Caco-2 (cell line): ENCODE measurements at regions of chr12 and their contacts with region 1.

Region 1: DNA sequence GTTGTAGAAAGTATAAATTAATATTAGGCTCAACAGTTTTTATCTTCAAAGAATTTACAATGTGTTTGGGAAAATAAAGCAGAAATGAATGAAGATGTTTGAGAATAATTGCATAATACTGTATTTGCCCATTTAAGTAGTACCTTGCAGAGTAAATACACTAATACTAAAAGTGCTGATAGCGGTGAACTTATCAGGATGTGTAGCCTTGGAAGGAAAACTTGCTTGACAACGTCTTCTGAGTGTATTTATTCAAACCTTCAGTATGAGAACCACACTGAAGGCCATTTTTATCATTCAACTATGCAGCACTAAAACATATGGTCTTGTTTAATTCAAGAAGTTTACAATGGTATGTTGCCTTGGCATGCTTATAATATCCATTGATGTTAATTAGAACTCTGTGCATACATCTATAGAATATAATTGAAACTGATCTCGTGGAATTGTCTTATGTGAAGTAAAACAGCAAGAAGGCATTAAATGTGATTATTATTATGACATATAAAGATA is 41.3 kb downstream of the MSRB3 start:
- DNase-seq: peak in 1 of 2 experiments; percentile 65
- H3K4me3 ChIP-seq: no peak overlapping the region
- H3K4me3 Mint-ChIP-seq: no peak overlapping the region
- H3K27ac Mint-ChIP-seq: no peak overlapping the region
- H3K4me1 ChIP-seq: peaks cover 21% of the 10 kb centered on the region
- H3K4me1 Mint-ChIP-seq: peaks cover 14% of the 10 kb centered on the region
- H3K27me3 ChIP-seq: no peaks in the 10 kb centered on the region
- H3K27me3 Mint-ChIP-seq: no peaks in the 10 kb centered on the region
- CTCF ChIP-seq: no peak

Region 2: GRCh38 chr12:65335021-65335714 is 15.4 kb after region 1 on chr12:
- CTCF ChIA-PET with region 1: no interaction called
- POLR2A ChIA-PET with region 1: no interaction called
- intact Hi-C with region 1: loop called (anchors 1 kb)
- DNase-seq: peak; percentile 58 to 66
- H3K4me3 ChIP-seq: no peak overlapping the region
- H3K4me3 Mint-ChIP-seq: peak overlapping the region; percentile 64
- H3K27ac Mint-ChIP-seq: peak overlapping the region; percentile 64
- H3K4me1 ChIP-seq: peaks cover 25% of the 10 kb centered on the region
- H3K4me1 Mint-ChIP-seq: peaks cover 21% of the 10 kb centered on the region
- H3K27me3 ChIP-seq: no peaks in the 10 kb centered on the region
- H3K27me3 Mint-ChIP-seq: no peaks in the 10 kb centered on the region
- CTCF ChIP-seq: no peak

Region 3: DNA sequence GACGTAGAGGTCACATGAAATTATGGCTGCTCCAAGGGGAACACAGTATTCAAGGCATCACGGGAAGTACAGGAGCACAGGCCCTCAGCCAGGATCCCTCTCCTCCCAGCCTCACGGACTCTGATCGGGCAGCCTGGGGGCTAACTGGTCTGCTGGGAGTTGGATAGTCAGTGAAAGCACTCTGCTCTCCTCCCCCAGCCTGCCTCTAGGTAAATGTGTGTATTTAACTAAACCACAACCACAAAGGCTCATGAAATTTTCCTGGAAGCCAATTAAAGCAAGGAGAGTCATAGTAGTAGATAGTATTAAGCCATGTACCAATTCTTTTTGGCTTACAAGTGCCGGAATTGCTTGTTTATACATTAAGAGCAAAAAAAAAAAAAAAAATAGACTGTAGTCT is 213.0 kb after region 1 on chr12:
- CTCF ChIA-PET with region 1: no interaction called
- POLR2A ChIA-PET with region 1: no interaction called
- intact Hi-C with region 1: loop called (anchors 1 kb)
- DNase-seq: peak; percentile 20 to 75
- H3K4me3 ChIP-seq: no peak overlapping the region
- H3K4me3 Mint-ChIP-seq: peak overlapping the region; percentile 61
- H3K27ac Mint-ChIP-seq: peak overlapping the region; percentile 77
- H3K4me1 ChIP-seq: peaks cover 40% of the 10 kb centered on the region
- H3K4me1 Mint-ChIP-seq: peaks cover 29% of the 10 kb centered on the region
- H3K27me3 ChIP-seq: no peaks in the 10 kb centered on the region
- H3K27me3 Mint-ChIP-seq: no peaks in the 10 kb centered on the region
- CTCF ChIP-seq: no peak

Region 4: DNA sequence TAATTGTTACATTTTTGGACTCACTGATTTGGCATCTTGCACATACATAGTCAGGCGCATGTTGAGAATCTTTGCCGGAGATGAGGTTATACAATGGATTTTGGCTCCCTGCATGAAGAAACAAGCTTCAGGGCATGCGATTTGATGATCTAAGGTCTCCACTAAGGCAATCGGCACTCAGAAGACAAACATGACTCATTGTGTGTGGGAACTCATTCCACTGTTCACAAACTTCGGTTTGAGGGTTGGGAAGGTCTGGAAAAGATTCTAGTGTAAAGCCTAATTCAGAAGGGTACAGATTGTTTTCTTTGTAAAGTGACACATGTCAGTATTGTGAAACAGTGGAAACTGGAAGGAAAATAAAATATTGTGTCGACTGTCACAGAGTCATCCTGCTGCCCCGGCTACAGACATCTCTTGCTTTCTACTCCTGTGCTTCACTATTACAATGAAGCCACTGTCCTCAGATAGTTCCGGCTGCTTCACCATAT is 311.9 kb after region 1 on chr12:
- CTCF ChIA-PET with region 1: no interaction called
- POLR2A ChIA-PET with region 1: no interaction called
- intact Hi-C with region 1: loop called (anchors 5 kb)
- DNase-seq: peak; percentile 34 to 41
- H3K4me3 ChIP-seq: no peak overlapping the region
- H3K4me3 Mint-ChIP-seq: no peak overlapping the region
- H3K27ac Mint-ChIP-seq: no peak overlapping the region
- H3K4me1 ChIP-seq: peaks cover 37% of the 10 kb centered on the region
- H3K4me1 Mint-ChIP-seq: peaks cover 51% of the 10 kb centered on the region
- H3K27me3 ChIP-seq: no peaks in the 10 kb centered on the region
- H3K27me3 Mint-ChIP-seq: no peaks in the 10 kb centered on the region
- CTCF ChIP-seq: no peak

Region 5: GRCh38 chr12:65823513-65824375 is 504.0 kb after region 1 on chr12:
- CTCF ChIA-PET with region 1: no interaction called
- POLR2A ChIA-PET with region 1: no interaction called
- intact Hi-C with region 1: loop called (anchors 2 kb)
- DNase-seq: peak; percentile 61 to 76
- H3K4me3 ChIP-seq: peak overlapping the region; percentile 70
- H3K4me3 Mint-ChIP-seq: peak overlapping the region; percentile 97
- H3K27ac Mint-ChIP-seq: peak overlapping the region; percentile 84
- H3K4me1 ChIP-seq: peaks cover 10% of the 10 kb centered on the region; the same call in 1 of the 2 replicates
- H3K4me1 Mint-ChIP-seq: peaks cover 5% of the 10 kb centered on the region
- H3K27me3 ChIP-seq: no peaks in the 10 kb centered on the region
- H3K27me3 Mint-ChIP-seq: no peaks in the 10 kb centered on the region
- CTCF ChIP-seq: no peak

Region 6: DNA sequence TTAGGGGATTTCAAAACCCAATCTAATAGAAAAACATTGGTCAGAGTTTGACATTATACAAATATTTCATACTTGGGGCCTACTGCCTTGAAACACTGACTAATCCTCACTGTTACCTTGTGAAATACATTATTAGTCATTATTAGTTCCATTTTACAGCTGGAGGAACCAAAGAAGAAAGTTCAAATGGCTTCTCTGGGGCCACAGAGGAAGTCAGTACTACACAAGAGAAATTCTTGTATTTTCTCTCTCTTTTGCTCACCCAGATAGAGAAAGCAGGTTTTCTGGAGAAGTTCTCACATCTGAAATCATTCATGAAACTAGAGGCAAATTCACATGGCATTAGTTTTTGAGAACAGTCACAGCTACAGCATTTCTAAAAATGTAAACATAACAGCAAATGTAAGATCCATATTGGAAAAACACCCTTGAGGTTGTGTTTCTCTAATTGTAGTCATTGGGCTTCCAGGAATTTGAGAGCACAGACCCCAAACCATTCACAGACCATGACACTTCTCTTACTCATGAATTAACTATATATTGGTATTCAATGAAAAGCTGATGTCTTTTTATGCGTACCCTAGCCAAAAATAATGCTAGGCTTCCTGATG is 727.8 kb after region 1 on chr12:
- CTCF ChIA-PET with region 1: no interaction called
- POLR2A ChIA-PET with region 1: no interaction called
- intact Hi-C with region 1: loop called (anchors 1 kb)
- DNase-seq: no peak
- H3K4me3 ChIP-seq: no peak overlapping the region
- H3K4me3 Mint-ChIP-seq: no peak overlapping the region
- H3K27ac Mint-ChIP-seq: no peak overlapping the region
- H3K4me1 ChIP-seq: peaks cover 41% of the 10 kb centered on the region
- H3K4me1 Mint-ChIP-seq: peaks cover 10% of the 10 kb centered on the region
- H3K27me3 ChIP-seq: no peaks in the 10 kb centered on the region
- H3K27me3 Mint-ChIP-seq: no peaks in the 10 kb centered on the region
- CTCF ChIP-seq: no peak